Posterior vena cava (tissue), 2 donors: ENCODE measurements at regions of chr16 and their contacts with region 1.

Region 1: DNA sequence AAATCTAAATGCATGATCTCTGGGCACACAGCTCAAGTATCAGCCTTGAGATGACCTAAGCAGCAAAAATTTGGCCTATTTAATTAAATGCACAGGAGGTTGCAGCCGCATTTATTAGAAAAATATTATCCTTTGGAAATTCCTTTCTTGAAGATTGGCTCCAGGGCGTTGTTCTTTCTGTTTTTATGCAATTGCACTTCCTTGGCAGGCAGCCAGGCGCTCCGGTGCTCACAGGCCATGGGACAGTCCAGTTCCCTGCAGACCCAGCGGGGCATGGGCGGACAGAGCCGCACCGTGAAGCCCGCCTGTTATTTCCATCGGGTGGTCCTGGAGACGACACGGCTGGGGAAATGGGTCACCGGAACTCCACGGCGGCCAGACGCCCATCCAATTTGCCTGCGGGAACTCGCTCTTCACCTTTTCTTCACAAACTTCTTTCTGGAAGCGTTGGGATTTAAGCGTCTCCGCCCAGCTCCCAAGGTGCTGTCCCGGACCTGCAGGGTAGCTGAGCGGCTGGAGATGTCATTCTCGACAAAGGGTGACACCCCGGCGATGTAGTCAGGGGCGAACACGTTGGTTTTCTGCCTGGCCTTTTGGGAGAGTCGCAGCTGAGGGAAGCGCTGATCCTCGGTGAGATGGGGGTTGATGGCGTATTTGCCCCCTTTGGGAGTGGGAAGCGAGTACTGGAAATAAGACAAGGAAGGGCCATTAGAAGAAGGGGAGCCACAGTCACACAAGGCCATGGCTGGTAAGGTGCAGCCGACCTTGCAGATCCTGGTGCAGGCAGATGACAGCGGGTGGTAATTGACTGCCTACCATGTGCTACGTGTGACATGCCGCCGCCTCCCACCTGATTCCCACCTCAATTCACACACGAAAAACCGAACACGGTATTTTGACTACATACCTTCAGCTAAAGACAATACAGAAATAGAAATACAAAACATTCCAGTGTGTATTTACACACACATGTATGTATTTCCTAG is 12.5 kb downstream of the NOB1 start:
- DNase-seq: peak; percentile 90

Region 2: GRCh38 chr16:69404275-69404805 is 337.9 kb before region 1 on chr16:
- intact Hi-C with region 1: loop called in 1 of 2 experiments (anchors 10 kb)
- DNase-seq: no peak

Region 3: DNA sequence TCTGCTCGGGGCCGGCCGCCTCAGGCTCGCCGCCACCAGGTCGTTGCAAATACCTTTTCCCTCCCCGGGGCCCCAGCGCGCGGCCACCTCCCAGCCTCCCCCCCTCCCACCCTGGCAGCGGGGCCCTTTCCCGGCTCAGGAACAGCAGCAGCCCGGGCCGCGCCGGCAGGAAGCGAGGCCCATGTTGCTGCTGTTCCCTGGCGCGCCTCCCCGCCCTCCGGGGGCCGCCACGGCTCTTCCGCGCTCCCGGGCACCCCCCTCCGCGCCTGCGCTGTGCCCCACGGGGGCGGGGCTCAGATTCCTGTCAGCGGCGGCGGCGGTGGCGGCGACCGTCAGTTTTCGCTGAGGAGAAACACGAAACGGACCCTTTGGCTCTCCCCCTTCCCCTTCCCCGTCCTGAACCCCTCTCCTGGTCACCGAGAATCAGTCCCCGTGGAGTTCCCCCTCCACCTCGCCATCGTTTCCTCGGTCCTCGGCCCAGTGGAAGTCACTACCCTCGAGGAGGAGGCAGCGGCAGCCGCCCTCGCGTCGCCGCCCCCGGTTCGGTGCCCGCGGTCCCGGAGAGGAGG is 176.5 kb before region 1 on chr16 and contains the start of gene NFAT5:
- intact Hi-C with region 1: no loop called
- DNase-seq: peak; percentile 95
- total RNA-seq, gene NFAT5: 43.0 to 55.3 TPM

Region 4: DNA sequence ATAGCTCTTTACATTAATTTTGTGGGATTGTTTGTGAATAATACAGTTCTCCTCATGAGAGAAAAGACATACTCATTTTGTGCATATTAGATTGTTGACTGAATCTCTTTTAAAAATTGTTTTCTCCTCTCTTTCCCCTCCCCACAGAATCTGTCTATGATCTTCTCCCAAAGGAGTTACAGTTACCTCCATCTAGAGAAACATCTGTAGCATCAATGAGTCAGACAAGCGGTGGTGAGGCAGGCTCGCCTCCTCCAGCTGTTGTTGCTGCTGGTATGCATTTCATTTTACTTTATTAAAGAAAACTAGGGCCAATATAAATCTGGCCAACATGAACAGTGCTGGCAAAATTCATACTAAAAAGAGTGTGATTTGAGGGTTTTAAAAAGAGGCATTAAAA is 116.0 kb before region 1 on chr16:
- intact Hi-C with region 1: no loop called
- DNase-seq: no peak

Region 5: GRCh38 chr16:69773260-69773947 is 31.2 kb after region 1 on chr16:
- intact Hi-C with region 1: loop called in 1 of 2 experiments (anchors 2 kb)
- DNase-seq: no peak

Region 6: GRCh38 chr16:69848637-69849545 is 106.7 kb after region 1 on chr16:
- intact Hi-C with region 1: no loop called
- DNase-seq: peak; percentile 95

Region 7: GRCh38 chr16:71645453-71645852 is 1903.2 kb after region 1 on chr16:
- intact Hi-C with region 1: no loop called
- DNase-seq: no peak